ENCODE measurements at regions of chr5 and their contacts with region 1.

Region 1: DNA sequence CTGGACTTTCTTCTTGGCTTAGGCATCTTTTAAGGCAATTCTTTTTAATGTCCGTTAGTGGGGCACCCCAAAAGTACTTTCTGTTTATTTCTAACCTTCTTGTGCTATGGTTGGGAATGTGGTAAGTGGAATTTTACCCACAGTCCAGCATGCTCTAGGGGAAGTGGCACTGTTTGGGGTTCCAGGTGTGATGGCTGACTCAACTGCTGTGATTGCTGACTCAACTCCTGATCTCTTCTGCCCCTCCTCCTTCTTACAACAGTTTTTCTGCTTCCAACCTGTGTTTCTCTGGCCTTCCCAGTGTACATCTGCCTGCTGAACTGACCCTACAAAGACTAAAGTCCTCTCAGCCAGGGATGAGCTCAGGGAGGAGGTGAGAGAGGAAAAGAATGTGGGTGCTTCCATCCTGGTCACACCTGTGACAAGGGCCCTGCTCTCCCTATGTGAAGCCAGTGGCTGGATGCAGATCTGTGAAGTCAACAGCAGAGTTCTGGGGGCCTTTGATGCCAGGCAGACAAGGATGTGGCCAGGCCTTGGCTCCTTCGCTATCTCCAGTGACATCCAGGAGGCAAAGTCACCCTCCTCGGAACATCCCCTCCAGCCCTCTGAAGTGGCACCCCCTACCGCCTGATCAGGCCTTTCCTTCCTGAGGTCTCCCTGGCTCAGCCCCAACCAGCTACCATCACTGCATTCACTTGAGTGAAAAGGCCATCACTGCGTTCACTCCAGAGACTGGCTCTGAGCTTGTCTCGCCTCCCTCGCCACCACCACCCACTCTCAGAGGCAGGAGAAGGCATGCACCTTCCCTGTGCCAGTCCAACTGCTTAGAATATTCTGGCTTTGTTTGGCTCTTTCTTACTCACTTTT is 72.2 kb downstream of the C5orf15 start:
- DNase-seq: no peak

Region 2: DNA sequence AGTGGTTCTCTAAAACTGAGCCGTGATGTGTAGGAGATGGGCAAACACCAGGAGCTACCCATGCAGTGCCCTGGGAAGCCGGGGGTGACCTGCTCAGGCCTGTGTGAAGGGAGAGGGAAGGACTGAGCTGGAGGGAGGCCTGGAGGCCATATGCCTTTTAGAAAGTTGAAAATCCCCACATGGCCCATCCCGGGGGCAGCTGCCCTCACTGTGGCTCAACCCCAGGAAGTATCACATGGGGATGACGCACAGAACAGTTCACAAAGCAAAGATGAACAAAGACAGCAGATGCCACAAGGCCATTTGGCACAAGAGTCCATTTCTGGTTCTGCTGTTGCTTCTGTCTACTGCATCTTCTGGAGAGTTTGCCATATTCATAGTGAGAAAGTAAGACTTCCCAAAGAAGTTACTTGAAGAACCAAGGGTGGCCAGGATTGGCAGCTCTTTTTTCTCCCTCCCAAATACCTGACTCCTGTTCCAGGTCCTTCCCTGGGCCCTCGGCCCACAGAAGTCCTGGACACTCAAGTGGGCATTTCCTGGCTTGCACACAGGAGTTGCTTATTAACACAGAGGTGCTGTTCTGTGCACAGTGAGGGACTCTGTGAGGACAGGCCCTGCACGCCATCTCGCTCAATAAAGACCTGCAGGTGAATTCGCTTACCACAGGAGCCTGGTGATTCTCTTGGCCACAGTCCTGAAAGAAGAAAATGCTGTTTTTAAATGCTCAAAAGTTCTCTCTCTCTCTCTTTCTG is 1909.9 kb before region 1 on chr5:
- intact Hi-C with region 1: loop called in 1 of 2 experiments (anchors 5 kb)
- DNase-seq: peak; percentile 63